HEK293T (cell line): ENCODE measurements at regions of chr4 and their contacts with region 1.

Region 1: GRCh38 chr4:163332500-163333406 is at the start of gene NPY1R:
- DNase-seq: peak; percentile 78

Region 2: GRCh38 chr4:163111593-163111992 is 221.2 kb before region 1 on chr4:
- CTCF ChIA-PET with region 1: interaction called, 11 read pairs
- POLR2A ChIA-PET with region 1: no interaction called
- DNase-seq: peak; percentile 20

Region 3: DNA sequence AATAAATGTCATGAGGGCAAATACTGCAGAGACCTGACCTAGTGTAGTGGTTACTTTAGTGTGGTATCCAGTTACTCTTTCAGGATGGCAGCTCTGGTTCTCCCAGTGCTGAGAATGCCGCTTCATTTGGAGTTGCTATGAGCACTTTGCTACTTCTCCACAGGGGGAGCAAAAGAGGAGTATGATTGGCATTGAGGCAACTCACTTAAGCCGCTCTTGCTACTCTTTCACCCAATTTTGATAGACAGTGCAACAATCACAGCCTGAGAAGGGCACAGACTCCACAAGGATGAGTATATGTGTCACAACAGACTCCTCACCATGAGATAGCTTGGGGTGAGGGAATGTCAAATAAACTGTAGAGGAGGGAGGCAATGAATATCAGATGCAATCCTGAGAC is 81.5 kb before region 1 on chr4:
- CTCF ChIA-PET with region 1: no interaction called
- POLR2A ChIA-PET with region 1: no interaction called
- DNase-seq: peak; percentile 30

Region 4: DNA sequence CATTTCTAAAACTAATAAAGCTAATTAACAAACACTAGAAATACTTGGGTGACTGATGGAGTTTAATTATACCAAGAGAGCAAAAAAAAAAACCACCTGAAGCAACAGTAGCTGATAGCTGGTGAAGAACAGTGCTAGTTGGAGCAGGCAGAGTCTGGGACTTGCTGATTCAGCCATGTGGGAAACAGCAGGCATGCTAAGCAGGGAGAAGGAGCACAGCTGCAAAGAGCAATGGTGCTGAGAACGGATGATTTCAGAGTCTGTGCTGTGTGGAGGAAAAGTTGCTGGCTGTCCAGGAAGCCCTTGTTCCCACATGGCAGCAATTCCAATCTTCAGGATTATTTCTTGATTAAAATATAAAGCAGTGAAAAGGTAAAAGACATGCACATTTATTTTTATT is 69.1 kb before region 1 on chr4:
- CTCF ChIA-PET with region 1: no interaction called
- POLR2A ChIA-PET with region 1: no interaction called
- DNase-seq: no peak